Spleen (tissue), 13 donors: ENCODE measurements at regions of chr2 and their contacts with region 1.

Region 1: DNA sequence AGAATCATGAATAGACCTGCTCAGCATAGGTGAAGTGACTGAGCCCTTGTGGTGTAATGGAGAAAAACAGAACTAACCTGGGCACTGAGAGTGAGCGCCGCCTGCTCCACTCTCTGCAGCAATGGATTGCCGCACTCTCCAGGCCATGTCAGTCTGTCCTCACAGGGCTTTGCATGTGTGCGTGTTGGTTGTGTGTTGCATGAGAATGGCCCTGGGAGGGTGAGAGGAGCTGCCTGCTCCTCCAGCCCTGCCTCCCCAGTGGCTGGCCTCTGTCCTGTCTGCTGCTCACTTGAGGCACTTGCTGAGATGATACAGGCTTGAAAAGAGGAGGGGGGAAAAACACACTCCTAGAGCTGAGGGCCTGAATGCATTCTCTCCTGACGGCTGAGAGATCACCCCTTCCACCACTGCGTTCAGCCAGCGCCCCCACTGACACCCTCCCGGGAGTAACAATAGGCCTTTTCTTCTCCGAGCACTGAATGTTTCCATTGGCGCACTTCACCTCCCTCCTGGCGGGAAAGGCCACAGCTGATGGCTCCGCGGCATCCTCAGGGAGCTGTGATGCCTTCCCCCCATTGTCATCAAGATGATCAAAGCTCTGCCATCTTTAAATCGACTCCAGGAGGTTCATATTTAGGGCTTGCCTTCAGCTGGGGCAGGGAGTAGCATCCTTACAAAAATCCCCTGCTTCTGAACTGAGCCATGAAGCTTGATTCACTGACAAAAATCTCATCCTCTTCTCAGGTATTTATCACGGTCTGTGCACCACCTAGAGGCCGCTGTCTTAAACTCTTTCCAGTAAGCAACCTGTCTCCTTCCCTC is 49.9 kb upstream of the DAPL1 start:
- DNase-seq: no peak
- H3K4me3 ChIP-seq: no peak overlapping the region
- H3K27ac ChIP-seq: no peak overlapping the region
- H3K4me1 ChIP-seq: peaks cover 0 to 15% (median 7%) of the 10 kb centered on the region in 6 donors
- H3K27me3 ChIP-seq: peaks cover 0 to 47% (median 0%) of the 10 kb centered on the region in 7 donors
- CTCF ChIP-seq: peak in 7 of 11 experiments; percentile 21 to 53 (median 32)
- POLR2A ChIP-seq: no peak

Region 2: DNA sequence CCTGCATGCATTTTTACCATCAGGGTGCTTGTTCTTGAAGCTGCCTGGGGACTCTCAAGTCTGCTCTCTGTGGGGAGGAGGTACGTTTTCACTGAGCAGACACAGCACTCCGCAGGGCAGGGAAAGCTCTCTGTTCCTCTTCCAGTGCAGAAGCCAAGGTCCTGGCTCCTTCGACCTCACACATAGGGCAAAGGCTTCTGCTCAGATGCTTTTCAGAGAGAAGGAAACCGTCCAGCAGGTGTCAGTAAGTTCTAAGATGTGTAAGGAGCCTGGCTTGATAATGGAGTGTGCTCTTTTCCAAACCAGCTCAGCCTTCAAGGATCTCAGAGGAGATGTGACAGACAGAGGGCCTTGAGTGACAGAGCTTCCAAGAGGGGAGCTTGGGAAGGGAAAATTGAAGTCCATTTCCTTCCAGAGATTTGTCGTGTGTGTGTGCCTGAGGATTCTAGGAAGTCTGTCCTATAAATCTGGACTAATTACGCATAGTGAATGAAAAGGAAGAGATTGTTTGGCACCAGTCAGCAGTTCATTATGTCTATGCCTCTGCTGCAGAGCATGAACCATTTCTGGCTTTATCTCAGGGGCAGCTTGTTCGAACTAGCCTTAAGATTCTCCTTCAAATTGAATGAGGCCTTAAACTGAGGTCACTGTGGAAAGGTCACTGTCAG is 710.9 kb before region 1 on chr2:
- intact Hi-C with region 1: loop called (anchors 5 kb)
- DNase-seq: no peak
- H3K4me3 ChIP-seq: no peak overlapping the region
- H3K27ac ChIP-seq: no peak overlapping the region
- H3K4me1 ChIP-seq: peaks cover 0 to 11% (median 5%) of the 10 kb centered on the region in 6 donors
- H3K27me3 ChIP-seq: no peaks in the 10 kb centered on the region
- CTCF ChIP-seq: peak in 9 of 11 experiments; percentile 15 to 62 (median 42)
- POLR2A ChIP-seq: no peak

Region 3: GRCh38 chr2:158464426-158465281 is 280.6 kb before region 1 on chr2:
- intact Hi-C with region 1: loop called (anchors 10 kb)
- DNase-seq: no peak
- H3K4me3 ChIP-seq: no peak overlapping the region
- H3K27ac ChIP-seq: no peak overlapping the region
- H3K4me1 ChIP-seq: peaks cover 0 to 12% (median 7%) of the 10 kb centered on the region in 6 donors
- H3K27me3 ChIP-seq: no peaks in the 10 kb centered on the region
- CTCF ChIP-seq: peak in 5 of 11 experiments; percentile 15 to 49 (median 28)
- POLR2A ChIP-seq: no peak

Region 4: GRCh38 chr2:158953926-158954763 is 208.9 kb after region 1 on chr2:
- intact Hi-C with region 1: no loop called
- DNase-seq: no peak
- H3K4me3 ChIP-seq: no peak overlapping the region
- H3K27ac ChIP-seq: no peak overlapping the region
- H3K4me1 ChIP-seq: peaks cover 0 to 14% (median 5%) of the 10 kb centered on the region in 6 donors
- H3K27me3 ChIP-seq: peaks cover 0 to 6% (median 0%) of the 10 kb centered on the region in 7 donors
- CTCF ChIP-seq: no peak
- POLR2A ChIP-seq: no peak